A673 (cell line): ENCODE measurements at regions of chr3 and their contacts with region 1.

Region 1: DNA sequence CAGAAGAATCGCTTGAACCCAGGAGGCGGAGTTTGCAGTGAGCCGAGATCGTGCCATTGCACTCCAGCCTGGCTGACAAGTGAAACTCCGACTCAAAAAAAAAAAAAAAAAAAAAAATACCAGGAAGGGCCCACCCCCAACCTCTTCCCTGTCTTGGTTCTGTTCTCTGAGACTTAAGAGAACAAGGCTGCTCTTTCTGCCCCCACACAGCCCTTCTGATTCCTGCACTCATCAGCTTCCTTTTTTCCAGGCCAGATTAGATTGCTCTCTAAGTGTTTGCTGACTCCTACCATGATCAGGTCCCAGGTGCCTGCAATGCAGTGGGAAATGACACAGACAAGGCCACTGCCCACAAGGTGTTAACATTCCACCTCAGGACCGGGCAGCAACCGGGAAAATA is 13.0 kb downstream of the TMEM44 start:
- DNase-seq: no peak
- H3K4me3 ChIP-seq: no peak overlapping the region
- H3K27ac ChIP-seq: peak overlapping the region; percentile 30
- H3K4me1 ChIP-seq: no peaks in the 10 kb centered on the region
- H3K27me3 ChIP-seq: no peaks in the 10 kb centered on the region
- CTCF ChIP-seq: no peak

Region 2: DNA sequence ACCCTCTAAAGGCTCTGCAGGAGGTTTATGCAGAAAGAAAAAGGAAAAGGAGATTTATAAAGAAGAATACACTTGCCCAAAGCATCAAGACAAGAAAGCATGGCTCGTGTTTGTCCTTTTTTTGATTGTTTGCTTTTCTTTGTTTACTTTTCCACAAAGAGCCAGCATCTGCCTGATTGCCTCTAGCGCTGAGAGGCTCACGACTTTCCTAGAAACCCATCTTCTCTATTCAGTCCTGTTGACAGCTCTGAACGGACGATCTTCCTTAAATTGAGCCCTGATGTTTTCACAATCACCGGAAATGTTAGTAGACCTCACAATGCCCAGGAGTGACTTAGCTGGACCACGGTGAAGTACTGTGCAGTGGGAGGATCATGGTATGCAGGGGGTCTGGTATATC is 233.6 kb before region 1 on chr3:
- CTCF ChIA-PET with region 1: no interaction called
- POLR2A ChIA-PET with region 1: no interaction called
- intact Hi-C with region 1: no loop called
- DNase-seq: no peak
- H3K4me3 ChIP-seq: no peak overlapping the region
- H3K27ac ChIP-seq: no peak overlapping the region
- H3K4me1 ChIP-seq: peaks cover 6% of the 10 kb centered on the region
- H3K27me3 ChIP-seq: no peaks in the 10 kb centered on the region
- CTCF ChIP-seq: no peak

Region 3: GRCh38 chr3:194632809-194633348 is 12.7 kb after region 1 on chr3:
- CTCF ChIA-PET with region 1: no interaction called
- POLR2A ChIA-PET with region 1: interaction called, 13 read pairs
- intact Hi-C with region 1: no loop called
- DNase-seq: peak; percentile 78
- H3K4me3 ChIP-seq: peak overlapping the region; percentile 84
- H3K27ac ChIP-seq: peak overlapping the region; percentile 77
- H3K4me1 ChIP-seq: no peaks in the 10 kb centered on the region
- H3K27me3 ChIP-seq: no peaks in the 10 kb centered on the region
- CTCF ChIP-seq: no peak